Endothelial cell of umbilical vein (primary cell): ENCODE measurements at regions of chr16 and their contacts with region 1.

Region 1: GRCh38 chr16:69565671-69566239 is at the start of gene NFAT5:
- DNase-seq: peak; percentile 94
- H3K4me3 ChIP-seq: peak within 1 kb of the TSS; percentile 84 to 95 (median 93)
- H3K27ac ChIP-seq: peak within 1 kb of the TSS; percentile 83
- H3K4me1 ChIP-seq: peaks cover 31% of the 10 kb centered on the region
- H3K27me3 ChIP-seq: no peaks in the 10 kb centered on the region
- CTCF ChIP-seq: no peak
- POLR2A ChIP-seq: peak; percentile 77
- total RNA-seq, gene NFAT5: 42.0 and 49.5 TPM in 2 replicates

Region 2: DNA sequence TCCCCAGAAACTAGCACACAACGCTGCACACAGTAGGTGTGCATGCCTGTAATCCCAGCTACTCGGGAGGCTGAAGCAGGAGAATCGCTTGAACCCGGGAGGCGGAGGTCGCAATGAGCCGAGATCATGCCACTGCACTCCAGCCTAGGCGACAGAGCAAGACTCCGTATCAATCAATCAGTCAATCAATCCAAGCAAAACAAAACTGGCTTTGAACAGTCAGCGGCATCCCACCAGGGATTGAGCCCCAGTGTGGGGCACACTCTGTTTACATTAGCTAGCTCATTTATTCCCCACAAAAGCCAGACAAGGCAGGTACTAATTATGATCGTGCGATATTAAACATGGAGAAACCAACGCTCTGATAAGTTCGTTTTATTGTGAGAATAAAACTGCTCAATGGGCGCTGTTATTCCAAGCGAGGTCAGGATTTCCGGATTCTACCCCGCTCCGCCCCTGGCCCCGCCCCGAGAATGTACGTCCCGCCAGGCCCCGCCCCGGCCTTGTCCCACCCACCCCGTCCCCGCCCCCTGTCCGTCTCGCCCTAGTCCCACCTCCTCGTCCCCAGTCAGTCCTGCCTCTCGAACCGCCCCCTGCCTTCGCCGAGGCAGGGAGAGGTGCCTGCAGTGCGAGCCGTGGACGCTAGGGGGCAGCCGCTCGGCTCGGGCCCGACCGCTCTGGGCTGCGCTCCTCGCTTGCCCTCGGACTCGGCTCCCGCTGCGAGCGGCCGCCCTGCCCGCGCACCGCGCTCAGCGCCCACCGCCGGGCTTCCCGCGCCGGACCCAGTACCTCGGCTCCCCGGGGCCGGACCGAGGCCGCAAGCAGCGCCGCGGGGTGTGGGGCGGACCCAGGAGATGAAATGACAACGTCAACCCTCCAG is 254.9 kb before region 1 on chr16 and contains the start of gene VPS4A:
- CTCF ChIA-PET with region 1: no interaction called
- POLR2A ChIA-PET with region 1: no interaction called
- dilution Hi-C with region 1: no loop called
- intact Hi-C with region 1: loop called (anchors 5 kb)
- DNase-seq: peak; percentile 98
- H3K4me3 ChIP-seq: peak within 1 kb of the TSS; percentile 56 to 76 (median 59)
- H3K27ac ChIP-seq: peak within 1 kb of the TSS; percentile 46
- H3K4me1 ChIP-seq: peaks cover 10% of the 10 kb centered on the region
- H3K27me3 ChIP-seq: no peaks in the 10 kb centered on the region
- CTCF ChIP-seq: peak; percentile 86 to 96
- POLR2A ChIP-seq: peak; percentile 85
- total RNA-seq, gene VPS4A: 34.8 and 37.1 TPM in 2 replicates

Region 3: GRCh38 chr16:69443927-69444631 is 121.7 kb before region 1 on chr16:
- CTCF ChIA-PET with region 1: no interaction called
- POLR2A ChIA-PET with region 1: no interaction called
- dilution Hi-C with region 1: no loop called
- intact Hi-C with region 1: no loop called
- DNase-seq: peak; percentile 61
- H3K4me3 ChIP-seq: no peak overlapping the region
- H3K27ac ChIP-seq: peak overlapping the region; percentile 64
- H3K4me1 ChIP-seq: peaks cover 13% of the 10 kb centered on the region
- H3K27me3 ChIP-seq: no peaks in the 10 kb centered on the region
- CTCF ChIP-seq: no peak
- POLR2A ChIP-seq: no peak

Region 4: DNA sequence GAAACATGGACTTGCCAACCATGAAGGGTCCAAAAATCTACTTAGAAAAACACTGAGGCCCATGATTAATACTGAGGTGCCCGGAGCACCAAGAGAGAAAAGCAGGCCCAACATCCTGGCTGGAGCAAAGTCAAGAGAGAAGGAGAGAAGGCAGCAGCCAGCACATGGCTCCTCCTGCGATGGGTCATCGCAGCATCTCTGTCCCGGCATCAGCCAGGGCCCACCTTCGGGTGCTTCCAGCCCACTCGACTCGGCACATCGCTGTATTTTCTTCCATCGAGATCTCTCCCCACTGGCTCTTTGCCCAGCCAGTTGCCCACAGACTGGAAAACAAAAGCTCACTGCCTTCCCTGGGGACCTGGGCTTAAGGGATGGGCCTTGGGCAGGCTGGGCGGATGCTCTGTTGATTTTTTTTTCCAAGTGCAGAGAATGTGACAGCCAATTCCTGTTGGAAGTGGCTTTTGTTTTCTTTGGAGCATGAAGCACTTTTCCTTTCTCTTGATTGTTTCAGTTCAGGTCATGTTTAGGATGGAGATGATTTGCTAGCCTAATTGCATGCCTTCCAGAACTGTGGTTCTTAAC is 83.3 kb before region 1 on chr16:
- CTCF ChIA-PET with region 1: interaction called, 7 read pairs
- POLR2A ChIA-PET with region 1: no interaction called
- dilution Hi-C with region 1: no loop called
- intact Hi-C with region 1: loop called (anchors 2 kb)
- DNase-seq: peak; percentile 97
- H3K4me3 ChIP-seq: no peak overlapping the region
- H3K27ac ChIP-seq: peak overlapping the region; percentile 78
- H3K4me1 ChIP-seq: peaks cover 25% of the 10 kb centered on the region
- H3K27me3 ChIP-seq: no peaks in the 10 kb centered on the region
- CTCF ChIP-seq: no peak
- POLR2A ChIP-seq: no peak

Region 5: GRCh38 chr16:69494993-69495392 is 70.8 kb before region 1 on chr16:
- CTCF ChIA-PET with region 1: interaction called, 4 read pairs
- POLR2A ChIA-PET with region 1: no interaction called
- dilution Hi-C with region 1: no loop called
- intact Hi-C with region 1: loop called (anchors 5 kb)
- DNase-seq: peak; percentile 42
- H3K4me3 ChIP-seq: no peak overlapping the region
- H3K27ac ChIP-seq: no peak overlapping the region
- H3K4me1 ChIP-seq: no peaks in the 10 kb centered on the region
- H3K27me3 ChIP-seq: peaks cover 0 to 2% of the 10 kb centered on the region in 2 experiments
- CTCF ChIP-seq: peak; percentile 40 to 43
- POLR2A ChIP-seq: no peak

Region 6: DNA sequence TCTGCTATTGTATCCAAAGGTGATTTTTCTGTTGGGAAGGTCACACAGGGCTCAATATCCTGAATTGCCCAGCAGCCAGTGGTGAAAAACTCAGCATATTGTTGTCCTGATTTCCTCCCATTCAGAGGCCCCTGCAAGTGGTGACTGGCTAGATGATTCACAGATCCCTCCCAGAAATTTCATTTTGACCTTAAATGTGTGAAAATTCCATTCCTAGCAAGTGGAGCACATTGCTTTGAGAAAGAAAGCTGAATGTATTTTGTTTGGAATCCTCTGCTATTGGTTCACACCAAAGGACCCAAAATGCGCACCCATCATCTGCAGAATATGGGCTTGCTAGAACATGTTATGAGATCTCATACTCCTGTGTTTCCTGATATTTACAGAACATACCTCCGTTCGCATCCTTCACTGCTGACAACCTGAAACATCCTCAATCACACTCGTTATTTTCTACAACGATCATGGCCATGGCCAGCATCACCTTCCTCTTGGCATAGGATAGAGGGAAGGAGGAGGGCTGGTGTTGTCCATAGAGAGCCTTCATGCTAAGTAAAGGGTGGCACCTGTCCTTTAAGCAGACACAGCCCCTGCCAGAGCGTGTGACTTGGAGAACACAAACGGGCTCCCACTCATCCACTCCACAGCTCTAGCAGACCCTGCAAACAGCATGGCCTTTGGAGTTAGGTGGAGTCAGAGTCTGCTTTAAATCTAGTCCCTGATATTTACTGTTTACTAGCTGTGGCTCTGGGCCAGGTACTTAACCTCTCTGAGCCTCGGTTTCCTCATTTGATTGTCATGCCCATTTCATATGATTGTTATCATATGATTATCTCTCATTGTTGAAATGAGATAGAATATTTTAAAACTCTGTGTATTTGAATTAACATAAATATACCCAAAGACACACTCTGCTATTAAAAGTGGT is 30.4 kb before region 1 on chr16:
- CTCF ChIA-PET with region 1: interaction called, 4 read pairs
- POLR2A ChIA-PET with region 1: interaction called, 3 read pairs
- dilution Hi-C with region 1: no loop called
- intact Hi-C with region 1: loop called (anchors 1 kb)
- DNase-seq: peak; percentile 94
- H3K4me3 ChIP-seq: no peak overlapping the region
- H3K27ac ChIP-seq: peak overlapping the region; percentile 14
- H3K4me1 ChIP-seq: peaks cover 19% of the 10 kb centered on the region
- H3K27me3 ChIP-seq: no peaks in the 10 kb centered on the region
- CTCF ChIP-seq: no peak
- POLR2A ChIP-seq: no peak